Left cardiac atrium (tissue), 4 donors: ENCODE measurements at regions of chr3 and their contacts with region 1.

Region 1: GRCh38 chr3:44400771-44401170 is 62.2 kb downstream of the TCAIM start:
- DNase-seq: no peak
- ATAC-seq: no peak

Region 2: DNA sequence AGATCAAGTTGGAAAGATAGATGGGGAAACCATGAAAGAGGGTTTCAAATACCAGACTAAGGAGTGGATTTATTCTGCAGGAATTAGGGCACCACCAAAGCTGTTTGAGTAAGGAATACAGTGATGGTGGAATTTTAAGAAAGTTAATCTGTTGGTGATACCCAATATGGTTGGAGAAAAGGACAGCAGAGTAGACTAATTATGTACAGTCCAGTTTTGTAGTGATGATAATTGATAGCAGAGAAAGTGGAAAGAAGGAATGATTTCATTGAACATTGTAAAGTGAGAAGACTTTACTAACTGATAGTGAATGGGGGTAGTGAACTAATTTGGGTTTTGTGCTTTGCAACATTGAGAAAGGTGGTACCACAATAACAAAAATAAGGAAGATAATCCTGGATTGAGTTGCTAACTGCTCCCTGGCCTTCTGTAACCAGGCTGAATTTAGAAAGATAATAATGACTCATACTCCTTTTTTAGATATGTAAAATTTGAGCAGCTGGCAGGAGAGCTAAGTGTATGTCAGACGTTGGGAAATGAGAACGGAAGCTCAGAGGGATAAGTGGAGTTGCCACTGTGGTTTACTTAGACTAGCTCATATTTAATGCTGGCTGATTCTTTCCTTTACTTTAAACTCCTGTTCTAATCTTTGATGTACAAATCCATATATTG is 45.3 kb before region 1 on chr3:
- intact Hi-C with region 1: loop called in 1 of 2 experiments (anchors 5 kb)
- DNase-seq: no peak
- ATAC-seq: peak; percentile 97

Region 3: GRCh38 chr3:44612678-44613077 is 211.9 kb after region 1 on chr3:
- intact Hi-C with region 1: no loop called
- DNase-seq: no peak
- ATAC-seq: no peak